Calu3 (cell line): ENCODE measurements at regions of chr12 and their contacts with region 1.

Region 1: DNA sequence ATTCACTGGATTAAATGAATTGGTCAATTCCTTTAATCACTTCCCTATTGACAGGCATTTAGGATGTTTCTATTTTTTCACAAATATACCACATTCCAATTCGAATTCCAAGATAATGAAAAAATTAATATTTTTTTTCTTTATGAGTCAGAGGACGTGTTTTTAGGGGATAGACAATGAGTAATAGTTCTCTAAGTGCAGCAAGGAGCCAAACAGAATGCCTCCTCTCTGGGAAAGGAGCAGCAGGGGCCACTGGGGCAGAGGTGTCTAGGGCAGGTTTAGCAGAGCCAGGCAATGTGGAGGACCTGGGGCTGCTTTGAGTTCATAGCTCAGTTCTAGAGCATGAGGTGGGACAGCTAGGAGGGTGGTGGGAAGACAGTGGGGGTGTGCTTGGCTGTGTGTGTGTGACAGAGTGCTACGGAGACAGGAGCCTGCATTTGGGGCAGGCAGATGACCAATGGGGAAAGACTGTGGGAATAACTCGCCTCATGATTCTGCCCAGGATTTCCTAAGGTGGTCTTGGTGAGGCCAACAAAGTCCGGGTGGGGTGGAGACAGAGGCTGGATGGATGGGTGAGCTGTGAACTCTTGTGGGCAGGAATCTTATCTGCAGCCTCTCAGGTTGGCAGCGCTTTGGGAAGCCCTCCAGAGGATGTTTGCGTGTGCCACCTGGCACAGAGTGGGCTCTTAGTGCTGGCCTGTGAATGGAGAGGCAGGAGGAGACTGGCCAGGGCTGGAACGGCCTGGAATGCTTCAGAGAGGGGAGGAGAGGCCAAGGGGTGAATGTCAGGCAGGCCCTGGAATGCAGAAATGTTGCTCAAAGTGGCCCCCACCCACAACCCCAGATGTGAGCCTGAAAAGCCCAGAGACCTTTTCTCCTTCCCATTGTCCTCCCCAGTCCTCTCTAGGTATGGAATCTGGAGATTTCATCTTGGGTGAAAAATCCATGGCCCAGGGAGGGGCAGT is 2.4 kb upstream of the KRT7 start:
- DNase-seq: peak; percentile 63
- H3K4me3 Mint-ChIP-seq: peak overlapping the region; percentile 85
- H3K27ac Mint-ChIP-seq: peak overlapping the region; percentile 97
- H3K4me1 Mint-ChIP-seq: peaks cover 64% of the 10 kb centered on the region
- H3K27me3 Mint-ChIP-seq: no peaks in the 10 kb centered on the region
- CTCF ChIP-seq: no peak

Region 2: DNA sequence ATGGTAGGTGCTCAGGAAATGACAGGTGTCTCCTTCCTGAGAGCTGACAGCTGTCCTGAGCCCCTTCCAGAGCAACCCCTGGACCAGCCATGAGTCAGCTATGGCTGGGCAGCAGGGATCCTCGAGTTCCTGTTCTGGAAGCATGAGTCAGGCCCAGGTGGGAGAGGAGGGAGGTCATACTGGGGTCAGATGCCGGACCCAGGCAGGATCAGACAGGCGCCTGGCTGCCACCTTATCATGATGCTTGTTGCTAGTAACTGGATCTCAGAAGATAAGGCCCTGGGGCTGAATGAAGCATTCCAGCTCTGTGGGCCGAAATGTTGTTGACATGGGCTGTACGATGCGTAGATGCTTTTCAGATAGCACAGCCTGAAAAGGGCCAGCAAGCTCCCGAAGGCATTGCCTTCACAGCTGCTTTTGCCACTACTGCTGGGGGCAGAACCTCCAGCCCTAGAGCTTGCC is 15.0 kb before region 1 on chr12:
- CTCF ChIA-PET with region 1: interaction called, 3 read pairs
- intact Hi-C with region 1: loop called (anchors 2 kb)
- DNase-seq: peak; percentile 83
- H3K4me3 Mint-ChIP-seq: no peak overlapping the region
- H3K27ac Mint-ChIP-seq: peak overlapping the region; percentile 97
- H3K4me1 Mint-ChIP-seq: peaks cover 60% of the 10 kb centered on the region
- H3K27me3 Mint-ChIP-seq: no peaks in the 10 kb centered on the region
- CTCF ChIP-seq: no peak

Region 3: DNA sequence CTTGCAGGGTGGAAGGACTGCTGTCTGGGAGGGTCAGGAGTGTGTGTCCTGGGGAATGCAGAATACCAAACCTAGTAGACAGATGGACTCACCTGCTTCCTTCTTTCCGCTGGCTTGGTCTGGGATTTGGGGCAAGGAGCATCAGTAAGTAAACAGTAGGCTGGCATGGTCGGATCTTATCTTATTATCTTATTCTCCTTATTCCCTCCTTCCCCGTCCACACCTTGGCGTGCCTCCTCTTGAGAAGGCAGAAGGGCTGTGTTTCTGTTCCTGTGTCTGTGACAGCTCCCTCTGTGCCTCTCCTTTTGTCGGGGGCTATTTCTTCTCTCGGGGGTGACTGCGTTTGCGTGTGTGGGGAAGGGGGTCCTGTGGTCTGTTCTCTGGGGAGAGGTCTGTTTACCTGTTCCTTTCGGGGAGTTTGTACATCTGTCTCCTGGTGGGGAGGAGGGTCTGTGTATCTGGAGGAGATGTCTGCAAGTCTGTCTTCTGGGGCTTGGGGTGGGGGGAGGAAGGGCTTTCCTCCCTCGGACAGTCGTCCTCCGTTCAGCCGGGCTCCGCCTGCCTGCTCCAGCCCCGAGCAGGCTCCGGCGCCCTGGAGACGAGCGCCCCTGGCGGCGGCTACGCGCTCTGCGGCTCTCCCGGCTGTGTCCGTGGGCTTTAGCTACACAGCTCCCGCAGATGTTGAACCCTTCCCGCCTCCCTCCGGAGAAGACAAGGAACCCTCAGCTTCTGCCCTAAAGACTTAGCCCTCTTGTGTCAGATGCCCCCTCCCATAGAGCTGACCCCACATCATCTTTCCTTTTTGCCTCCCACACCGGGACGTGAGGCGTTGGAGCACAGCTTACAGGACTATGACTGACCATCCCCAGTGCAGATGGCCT is 48.2 kb after region 1 on chr12:
- CTCF ChIA-PET with region 1: no interaction called
- intact Hi-C with region 1: loop called (anchors 10 kb)
- DNase-seq: peak; percentile 87
- H3K4me3 Mint-ChIP-seq: peak overlapping the region; percentile 54
- H3K27ac Mint-ChIP-seq: peak overlapping the region; percentile 100
- H3K4me1 Mint-ChIP-seq: peaks cover 40% of the 10 kb centered on the region
- H3K27me3 Mint-ChIP-seq: no peaks in the 10 kb centered on the region
- CTCF ChIP-seq: peak; percentile 82